Activated CD4-positive, alpha-beta memory T cell treated with anti-CD3 and anti-CD28 coated beads, Interleukin-2, amount 10 ng/mL, durations not matched to agents 7 days and 5 days (primary cell): ENCODE measurements at regions of chr14 and their contacts with region 1.

Region 1: DNA sequence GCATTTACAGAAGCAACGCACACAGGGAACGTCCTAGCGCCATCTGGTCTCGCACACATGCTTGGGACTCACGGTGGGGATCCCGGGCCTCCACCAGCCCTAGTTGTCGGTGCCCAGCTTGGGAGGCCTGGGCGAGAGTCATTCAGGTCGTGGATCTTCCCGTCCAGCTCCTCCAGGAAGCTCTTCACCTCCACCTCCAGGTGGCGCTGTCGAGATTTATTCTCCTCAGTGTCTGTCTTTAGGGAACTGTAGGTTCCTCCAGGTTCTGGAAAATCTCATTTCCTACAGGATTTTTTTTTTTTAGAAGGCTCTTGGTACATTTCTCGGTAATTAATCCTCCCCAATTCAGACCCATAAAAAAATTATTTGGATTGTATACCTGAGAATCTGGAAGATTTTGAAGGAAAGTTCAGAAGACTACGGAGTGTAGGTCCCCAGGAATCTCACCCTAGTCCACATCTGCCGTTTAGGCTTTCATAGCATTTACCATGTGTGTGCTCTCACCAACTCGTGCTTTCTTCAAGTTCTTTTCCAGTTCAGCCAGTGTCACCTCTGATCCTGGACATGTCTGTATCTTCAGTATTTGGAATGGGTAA is 910.0 kb downstream of the TMEM121 start:
- DNase-seq: peak; percentile 56
- H3K4me3 Mint-ChIP-seq: no peak overlapping the region
- H3K27ac Mint-ChIP-seq: no peak overlapping the region
- H3K4me1 Mint-ChIP-seq: no peaks in the 10 kb centered on the region
- H3K27me3 Mint-ChIP-seq: peaks cover 48% of the 10 kb centered on the region

Region 2: DNA sequence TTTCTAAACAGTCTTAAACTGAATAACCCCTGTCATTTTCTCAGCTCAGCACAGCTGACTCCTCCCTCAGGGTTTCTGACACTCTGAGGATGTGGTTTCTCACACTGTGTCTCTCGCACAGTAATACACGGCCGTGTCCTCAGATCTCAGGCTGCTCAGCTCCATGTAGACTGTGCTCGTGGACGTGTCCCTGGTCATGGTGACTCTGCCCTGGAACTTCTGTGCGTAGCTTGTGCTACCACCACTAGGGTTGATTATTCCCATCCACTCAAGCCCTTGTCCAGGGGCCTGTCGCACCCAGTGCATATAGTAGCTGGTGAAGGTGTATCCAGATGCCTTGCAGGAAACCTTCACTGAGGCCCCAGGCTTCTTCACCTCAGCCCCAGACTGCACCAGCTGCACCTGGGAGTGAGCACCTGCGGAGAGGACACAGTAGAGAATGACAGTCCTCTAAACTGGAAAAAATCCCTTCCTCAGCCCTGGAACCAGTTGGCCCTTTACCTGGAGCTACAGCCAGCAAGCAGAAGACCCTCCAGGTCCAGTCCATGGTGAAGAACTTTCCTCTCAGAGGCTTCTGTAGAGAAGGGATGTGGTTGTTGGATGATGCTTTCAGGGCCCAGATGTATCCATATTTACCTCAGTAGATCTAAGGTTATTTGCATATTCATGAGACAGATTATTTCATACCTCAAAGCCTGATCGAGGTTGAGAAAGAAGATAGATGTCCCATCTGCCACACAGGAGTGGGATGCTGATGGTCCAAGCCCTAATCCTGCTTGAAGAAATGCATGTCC is 74.8 kb after region 1 on chr14:
- CTCF ChIA-PET with region 1: interaction called, 14 read pairs
- POLR2A ChIA-PET with region 1: no interaction called
- DNase-seq: peak; percentile 70
- H3K4me3 Mint-ChIP-seq: peak overlapping the region; percentile 11
- H3K27ac Mint-ChIP-seq: peak overlapping the region; percentile 82
- H3K4me1 Mint-ChIP-seq: peaks cover 66% of the 10 kb centered on the region
- H3K27me3 Mint-ChIP-seq: peaks cover 32% of the 10 kb centered on the region

Region 3: DNA sequence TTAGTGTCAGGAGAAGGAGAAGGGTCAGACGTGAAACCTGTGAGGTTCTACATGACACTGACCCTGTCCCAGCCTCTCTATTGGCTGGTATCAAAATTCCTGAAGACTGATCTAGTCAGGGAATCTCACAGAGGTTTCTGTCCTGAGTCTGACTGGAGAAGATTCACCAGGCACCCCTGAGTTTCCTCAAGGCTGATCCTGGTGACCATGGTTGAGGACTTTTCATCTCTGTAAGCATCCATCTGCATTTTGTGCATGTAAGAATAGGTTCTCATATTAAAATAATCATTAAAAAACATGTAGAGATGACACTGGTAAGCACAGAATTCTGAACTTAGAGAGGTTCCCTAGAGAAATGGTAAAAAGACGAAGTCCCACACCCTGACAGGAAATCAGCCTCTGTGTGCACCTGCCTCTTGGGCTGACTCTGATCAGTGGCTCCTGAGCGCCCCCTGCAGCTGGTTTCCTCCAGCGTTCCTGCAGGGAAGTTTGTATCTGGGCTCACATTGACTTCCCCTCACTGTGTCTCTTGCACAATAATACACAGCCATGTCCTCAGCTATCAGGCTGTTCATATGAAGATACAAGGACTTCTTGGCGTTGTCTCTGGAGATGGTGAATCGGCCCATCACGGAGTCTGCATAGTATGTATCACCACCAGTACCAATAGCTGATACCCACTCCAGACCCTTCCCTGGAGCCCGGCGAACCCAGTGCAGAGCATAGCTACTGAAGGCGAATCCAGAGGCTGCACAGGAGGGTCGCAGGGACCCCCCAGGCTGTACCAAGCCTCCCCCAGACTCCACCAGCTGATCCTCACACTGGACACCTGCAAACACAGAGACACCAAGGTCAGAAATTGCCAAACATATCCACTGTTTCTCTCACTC is 81.9 kb after region 1 on chr14:
- CTCF ChIA-PET with region 1: interaction called, 12 read pairs
- POLR2A ChIA-PET with region 1: no interaction called
- DNase-seq: peak; percentile 85
- H3K4me3 Mint-ChIP-seq: no peak overlapping the region
- H3K27ac Mint-ChIP-seq: no peak overlapping the region
- H3K4me1 Mint-ChIP-seq: peaks cover 14% of the 10 kb centered on the region
- H3K27me3 Mint-ChIP-seq: peaks cover 46% of the 10 kb centered on the region

Region 4: DNA sequence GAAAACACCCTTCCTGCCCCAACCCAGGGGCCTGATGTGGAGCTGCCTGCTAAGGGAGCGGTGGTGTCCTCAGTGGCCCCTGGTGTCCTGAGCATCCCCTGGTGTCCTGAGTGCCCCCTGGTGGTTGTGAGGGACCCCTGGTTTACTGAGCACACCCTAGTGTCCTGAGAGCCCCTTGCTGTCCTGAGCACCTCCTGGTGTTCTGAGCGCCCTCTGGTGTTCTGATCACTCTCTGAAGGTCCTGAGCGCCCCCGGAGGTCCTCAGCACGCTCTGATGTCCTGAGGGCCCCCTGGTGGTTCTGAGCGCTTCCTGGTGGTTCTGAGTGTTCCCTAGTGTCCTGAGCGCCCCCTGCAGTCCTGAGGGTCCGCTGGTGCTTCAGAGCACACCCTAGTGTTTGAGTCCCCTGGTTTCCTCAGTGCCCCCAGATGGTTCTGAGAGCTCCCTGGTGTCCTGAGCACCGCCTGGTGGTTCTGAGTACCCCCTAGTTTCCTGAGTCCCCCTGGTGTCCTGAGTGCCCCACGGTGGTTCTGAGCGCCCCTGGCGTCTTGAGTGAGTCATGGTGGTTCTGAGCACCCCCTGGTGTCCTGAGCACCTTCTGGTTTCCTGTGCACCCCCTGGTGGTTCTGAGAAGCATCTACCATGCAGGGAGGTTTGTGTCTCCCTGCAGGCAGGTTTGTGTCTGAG is 94.2 kb after region 1 on chr14:
- CTCF ChIA-PET with region 1: interaction called, 16 read pairs
- POLR2A ChIA-PET with region 1: no interaction called
- DNase-seq: peak; percentile 43
- H3K4me3 Mint-ChIP-seq: no peak overlapping the region
- H3K27ac Mint-ChIP-seq: no peak overlapping the region
- H3K4me1 Mint-ChIP-seq: peaks cover 3% of the 10 kb centered on the region
- H3K27me3 Mint-ChIP-seq: peaks cover 41% of the 10 kb centered on the region